Activated naive CD4-positive, alpha-beta T cell treated with anti-CD3 and anti-CD28 coated beads, Interleukin-2, amount 10 ng/mL, durations not matched to agents 7 days and 5 days (primary cell): ENCODE measurements at regions of chr17 and their contacts with region 1.

Region 1: GRCh38 chr17:61635913-61636432 is 45.0 kb upstream of the NACA2 start:
- DNase-seq: peak; percentile 74
- H3K4me3 Mint-ChIP-seq: no peak overlapping the region
- H3K27ac Mint-ChIP-seq: no peak overlapping the region
- H3K4me1 Mint-ChIP-seq: no peaks in the 10 kb centered on the region
- H3K27me3 Mint-ChIP-seq: peaks cover 26% of the 10 kb centered on the region

Region 2: GRCh38 chr17:61551255-61551742 is 84.7 kb before region 1 on chr17:
- CTCF ChIA-PET with region 1: no interaction called
- DNase-seq: no peak
- H3K4me3 Mint-ChIP-seq: no peak overlapping the region
- H3K27ac Mint-ChIP-seq: no peak overlapping the region
- H3K4me1 Mint-ChIP-seq: peaks cover 4% of the 10 kb centered on the region
- H3K27me3 Mint-ChIP-seq: peaks cover 29% of the 10 kb centered on the region

Region 3: GRCh38 chr17:61729689-61730268 is 93.8 kb after region 1 on chr17:
- CTCF ChIA-PET with region 1: no interaction called
- DNase-seq: no peak
- H3K4me3 Mint-ChIP-seq: no peak overlapping the region
- H3K27ac Mint-ChIP-seq: no peak overlapping the region
- H3K4me1 Mint-ChIP-seq: peaks cover 8% of the 10 kb centered on the region
- H3K27me3 Mint-ChIP-seq: no peaks in the 10 kb centered on the region

Region 4: DNA sequence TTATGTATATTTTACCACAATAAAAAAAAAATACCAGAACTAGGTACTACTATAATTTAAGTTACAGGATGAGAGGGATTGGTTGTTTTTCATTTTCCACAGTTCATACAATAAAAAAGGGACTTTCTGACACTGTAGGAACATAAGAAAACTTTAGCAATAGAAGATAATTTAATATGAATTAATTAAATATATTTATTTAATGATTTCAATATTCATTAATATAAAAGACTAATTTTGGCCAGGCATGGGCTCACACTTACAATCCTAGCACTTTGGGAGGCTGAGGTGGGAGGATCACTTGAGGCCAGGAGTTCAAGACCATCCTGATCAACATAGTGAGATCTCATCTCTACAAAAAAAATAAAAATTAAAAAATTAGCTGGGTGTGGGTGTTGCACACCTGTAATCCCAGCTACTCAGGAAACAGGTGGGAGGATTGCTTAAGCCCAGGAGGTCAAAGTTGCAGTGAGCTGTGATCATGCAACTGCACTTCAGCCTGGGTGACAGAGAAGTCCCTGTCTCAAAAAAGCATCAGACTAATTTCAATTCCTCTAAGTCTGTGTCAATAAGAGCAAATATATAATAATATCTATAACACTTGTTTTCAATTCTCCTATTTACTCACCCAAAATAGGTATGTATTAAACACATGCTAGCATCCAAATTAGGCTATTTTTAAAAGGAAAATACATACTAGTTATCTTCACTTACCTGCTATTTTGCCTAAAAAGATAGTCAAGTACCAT is 147.8 kb after region 1 on chr17:
- CTCF ChIA-PET with region 1: no interaction called
- DNase-seq: no peak
- H3K4me3 Mint-ChIP-seq: no peak overlapping the region
- H3K27ac Mint-ChIP-seq: no peak overlapping the region
- H3K4me1 Mint-ChIP-seq: no peaks in the 10 kb centered on the region
- H3K27me3 Mint-ChIP-seq: no peaks in the 10 kb centered on the region

Region 5: DNA sequence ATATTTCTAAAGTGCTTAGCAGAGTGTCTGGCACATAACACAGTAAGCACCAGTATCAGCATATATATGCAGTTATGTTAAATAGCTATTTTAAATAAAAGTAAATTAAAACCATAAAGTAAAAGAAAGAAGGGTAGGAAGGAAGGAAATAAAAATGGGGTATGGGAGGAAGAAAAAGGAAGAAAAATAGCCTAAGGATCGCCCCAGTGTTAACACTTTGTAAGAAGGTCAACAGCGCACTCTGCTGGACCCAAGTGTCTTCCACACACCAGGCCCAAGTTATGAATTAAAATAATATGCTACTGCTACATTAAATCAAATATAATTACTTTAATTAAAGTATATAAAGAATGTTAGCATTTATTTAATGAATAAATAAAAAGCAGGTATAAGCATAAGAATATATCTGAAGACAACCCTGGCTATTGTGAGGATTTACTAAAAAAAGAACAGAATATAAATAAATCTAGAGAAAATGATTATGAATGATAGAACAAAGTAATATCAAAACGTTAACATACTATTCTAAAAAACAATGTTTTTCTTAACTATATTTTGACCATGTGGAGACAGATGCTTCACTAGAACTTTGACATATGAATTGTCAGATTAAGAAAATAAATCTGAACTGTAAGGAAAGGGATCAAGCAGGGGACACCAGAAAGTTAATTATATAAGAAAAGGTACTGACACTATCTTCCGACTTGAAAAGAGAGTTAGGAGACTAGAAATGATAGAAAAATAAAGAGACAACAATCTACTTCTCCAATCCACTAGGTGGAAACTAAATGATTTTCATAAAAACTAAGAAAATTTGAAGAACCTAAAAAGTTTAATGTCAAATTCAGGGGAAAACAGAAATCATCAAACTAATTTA is 201.4 kb after region 1 on chr17:
- CTCF ChIA-PET with region 1: interaction called, 11 read pairs
- DNase-seq: peak; percentile 72
- H3K4me3 Mint-ChIP-seq: no peak overlapping the region
- H3K27ac Mint-ChIP-seq: no peak overlapping the region
- H3K4me1 Mint-ChIP-seq: no peaks in the 10 kb centered on the region
- H3K27me3 Mint-ChIP-seq: no peaks in the 10 kb centered on the region

Region 6: DNA sequence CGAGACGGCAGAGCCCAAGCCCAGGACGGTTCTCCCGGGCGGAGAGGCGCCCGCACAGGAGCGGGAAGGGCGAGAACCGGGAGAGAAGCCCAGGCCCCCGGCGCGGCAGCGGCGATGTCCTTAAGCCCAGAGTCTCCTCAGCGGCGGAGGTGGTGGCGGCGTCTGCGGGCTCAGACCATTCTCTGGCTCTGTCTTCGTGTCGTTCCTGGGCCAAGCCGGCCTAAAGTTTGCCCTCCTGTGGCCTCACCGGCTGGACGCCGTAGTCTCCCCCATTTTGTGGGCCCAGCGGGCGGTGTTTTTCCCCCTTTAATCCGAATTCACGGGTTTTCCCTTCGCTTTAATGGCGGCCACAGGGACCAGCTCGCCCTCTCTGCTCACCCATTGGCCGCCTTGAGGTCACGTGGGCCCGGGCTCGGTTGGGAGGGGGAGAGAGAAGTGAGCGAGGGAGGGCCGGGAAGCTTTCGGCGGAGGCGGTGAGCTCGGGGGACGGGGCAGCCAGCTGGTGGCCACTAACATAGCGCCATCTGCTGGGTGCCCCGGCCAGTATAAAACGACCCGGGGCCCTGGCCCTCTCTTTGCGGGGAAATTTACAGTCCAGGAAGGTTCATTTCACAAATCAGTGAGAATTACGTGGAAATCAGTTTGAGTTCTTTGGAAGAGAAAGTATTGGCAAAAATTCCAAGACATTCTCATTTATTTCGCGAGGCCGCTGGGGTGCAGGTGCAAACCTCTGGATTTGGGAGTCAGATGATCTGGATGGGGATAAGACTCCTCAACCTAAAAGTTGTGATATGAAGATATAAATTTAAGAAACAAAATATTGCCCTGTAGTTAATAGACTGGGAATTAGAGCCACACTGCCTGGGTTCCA is 429.9 kb after region 1 on chr17:
- CTCF ChIA-PET with region 1: interaction called, 11 read pairs
- DNase-seq: peak; percentile 99
- H3K4me3 Mint-ChIP-seq: peak overlapping the region; percentile 93
- H3K27ac Mint-ChIP-seq: peak overlapping the region; percentile 97
- H3K4me1 Mint-ChIP-seq: peaks cover 31% of the 10 kb centered on the region
- H3K27me3 Mint-ChIP-seq: peaks cover 8% of the 10 kb centered on the region